Sciatic nerve (tissue), 2 donors: ENCODE measurements at regions of chr11 and their contacts with region 1.

Region 1: DNA sequence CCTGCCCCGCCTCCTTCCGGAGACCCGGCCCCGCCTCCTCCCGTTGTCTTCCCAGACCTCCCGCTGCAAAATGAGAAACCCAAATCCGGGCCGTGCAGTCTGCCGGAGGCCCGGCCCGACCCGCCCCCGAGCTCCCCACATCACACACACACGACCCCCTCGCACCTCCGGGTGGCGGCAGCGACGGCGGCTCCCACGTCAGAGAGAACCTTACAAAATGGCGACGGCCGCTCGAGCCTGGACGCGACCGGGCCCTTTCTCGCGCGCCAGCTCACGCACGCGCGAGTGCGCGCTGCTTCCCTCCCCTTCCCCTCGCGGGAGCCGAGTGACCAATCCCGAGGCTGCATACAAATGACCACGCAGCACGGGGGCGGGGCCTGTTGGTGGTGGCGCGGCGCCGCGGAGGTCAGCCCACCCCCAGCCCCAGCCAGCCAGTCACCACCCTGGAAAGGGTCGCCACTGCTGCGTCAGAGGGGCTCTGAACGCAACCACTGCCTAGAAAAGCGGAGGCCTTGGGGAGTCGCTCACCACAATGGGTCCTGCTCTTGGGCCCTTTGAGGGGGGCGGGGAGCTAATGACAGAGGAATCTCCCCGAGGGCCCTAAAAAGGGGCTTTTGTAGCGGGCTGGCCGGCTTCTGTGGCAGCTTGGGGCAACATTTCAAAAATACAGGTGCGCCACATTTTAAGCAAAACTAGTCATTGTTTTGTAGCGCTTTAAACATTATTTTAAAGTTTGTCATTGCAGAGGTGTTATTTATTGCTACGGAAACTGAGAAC is at the start of gene RBM4B:
- DNase-seq: peak; percentile 97
- ATAC-seq: peak; percentile 99
- total RNA-seq, gene RBM4B: 23.7 TPM

Region 2: DNA sequence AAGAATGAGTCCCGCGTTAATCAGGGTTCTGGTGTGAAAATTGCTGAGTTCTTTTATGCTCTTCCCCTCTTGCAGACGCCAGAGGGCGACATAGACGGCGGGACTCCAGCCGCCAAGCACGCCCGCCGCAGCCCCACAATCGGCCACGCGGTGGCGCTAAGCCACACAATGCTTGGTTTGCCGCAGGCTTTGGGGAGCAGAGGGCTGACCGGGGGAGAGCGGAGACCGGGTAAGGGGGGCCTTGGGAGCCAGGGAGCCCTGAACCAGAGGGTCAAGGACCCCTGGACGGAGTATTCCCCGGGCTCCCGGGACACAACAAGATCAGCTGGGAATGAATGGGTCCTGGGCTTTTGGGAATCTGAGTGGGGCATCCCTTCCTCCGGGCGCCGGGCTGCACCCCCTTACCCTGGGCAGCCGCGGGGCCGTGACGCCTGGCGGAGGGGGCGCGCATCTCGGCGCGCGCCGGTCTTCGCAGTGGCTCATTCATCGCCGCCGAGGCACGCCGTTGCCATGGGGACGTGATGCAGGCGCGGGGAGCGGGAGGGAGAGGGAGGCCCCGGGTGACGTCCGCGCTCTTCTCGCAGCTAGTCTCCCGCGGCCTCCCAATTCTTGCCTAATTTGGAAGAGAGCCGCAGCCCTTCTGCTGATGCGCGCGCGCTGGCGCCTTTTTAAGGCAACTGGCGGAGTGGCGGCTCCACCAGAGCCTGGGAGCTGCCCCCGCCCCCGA is 269.1 kb before region 1 on chr11:
- intact Hi-C with region 1: loop called (anchors 5 kb)
- DNase-seq: peak; percentile 94
- ATAC-seq: peak; percentile 97

Region 3: DNA sequence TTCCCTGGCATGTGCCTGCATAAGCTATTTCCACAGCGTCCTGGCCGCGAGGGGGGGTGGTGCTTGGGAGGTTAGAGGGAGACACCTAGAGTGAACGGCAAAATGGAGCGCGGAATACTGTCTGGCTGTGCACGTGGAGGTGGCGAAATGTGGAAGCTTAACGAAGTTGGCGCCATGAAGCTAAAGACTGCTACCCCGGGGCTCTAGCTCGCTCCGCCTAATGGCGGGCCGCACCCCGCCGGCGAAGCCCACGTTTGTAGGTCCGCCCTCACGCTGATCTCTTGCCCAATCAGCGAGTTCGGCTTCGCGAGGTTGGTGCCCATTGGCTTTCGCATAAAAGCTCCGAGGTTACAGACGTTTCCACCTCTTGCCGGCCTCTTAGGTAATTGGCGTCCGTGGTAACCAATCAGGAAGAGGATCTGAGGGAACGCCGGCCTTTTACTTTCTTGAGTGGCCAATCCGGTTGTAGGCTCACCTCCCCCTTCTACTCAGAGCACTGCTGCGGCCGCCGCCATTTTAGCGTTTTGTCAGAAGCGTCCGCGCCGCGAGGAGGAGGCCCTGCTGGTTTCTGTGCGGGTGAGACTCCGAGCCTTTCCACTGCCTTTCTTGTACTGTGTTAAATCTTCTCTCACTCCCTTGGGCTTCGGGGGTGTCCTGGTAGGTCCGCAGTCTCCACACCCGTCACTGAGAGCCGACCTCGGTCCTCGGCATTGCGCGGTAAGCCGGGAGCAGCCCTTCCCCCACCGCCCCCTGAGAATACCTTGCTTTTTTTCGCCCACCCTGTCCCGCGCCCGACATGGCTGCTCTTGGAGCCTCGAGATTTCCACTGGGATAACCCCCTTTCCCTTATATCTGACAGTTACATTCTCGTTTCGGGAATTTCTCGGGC is 39.4 kb before region 1 on chr11 and contains the start of gene RBM4:
- intact Hi-C with region 1: no loop called
- DNase-seq: peak; percentile 97
- ATAC-seq: peak; percentile 98
- total RNA-seq, gene RBM4: 88.6 TPM

Region 4: GRCh38 chr11:67698247-67698646 is 1020.5 kb after region 1 on chr11:
- intact Hi-C with region 1: no loop called
- DNase-seq: no peak
- ATAC-seq: no peak